Right ventricle myocardium inferior (tissue), 1 donor: ENCODE measurements at regions of chrX and their contacts with region 1.

Region 1: DNA sequence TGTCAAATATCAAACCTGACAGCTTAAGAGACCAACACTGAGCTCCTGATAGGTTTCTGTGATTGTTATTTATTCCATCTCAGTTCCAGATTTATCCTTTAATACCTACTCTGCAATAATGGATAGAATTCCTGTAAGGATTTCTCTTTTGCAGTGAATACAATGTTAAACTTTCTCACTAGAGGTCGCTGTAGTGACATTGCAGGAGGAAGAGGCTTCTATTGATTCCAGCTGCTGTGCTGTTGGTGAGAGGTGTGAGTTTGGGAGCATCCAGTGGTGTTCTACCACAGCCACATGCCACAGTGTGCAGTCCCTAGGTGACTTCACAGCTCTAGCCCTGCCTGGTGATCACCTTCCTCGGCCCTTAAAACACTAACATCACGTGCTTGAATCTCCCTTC is 34.6 kb upstream of the DCAF8L2 start:
- DNase-seq: no peak
- ATAC-seq: no peak

Region 2: GRCh38 chrX:27626066-27626465 is 70.6 kb after region 1 on chrX:
- intact Hi-C with region 1: no loop called
- DNase-seq: no peak
- ATAC-seq: no peak

Region 3: GRCh38 chrX:27680726-27681125 is 125.2 kb after region 1 on chrX:
- intact Hi-C with region 1: loop called (anchors 5 kb)
- DNase-seq: no peak
- ATAC-seq: no peak